H1 (cell line): ENCODE measurements at regions of chr19 and their contacts with region 1.

Region 1: DNA sequence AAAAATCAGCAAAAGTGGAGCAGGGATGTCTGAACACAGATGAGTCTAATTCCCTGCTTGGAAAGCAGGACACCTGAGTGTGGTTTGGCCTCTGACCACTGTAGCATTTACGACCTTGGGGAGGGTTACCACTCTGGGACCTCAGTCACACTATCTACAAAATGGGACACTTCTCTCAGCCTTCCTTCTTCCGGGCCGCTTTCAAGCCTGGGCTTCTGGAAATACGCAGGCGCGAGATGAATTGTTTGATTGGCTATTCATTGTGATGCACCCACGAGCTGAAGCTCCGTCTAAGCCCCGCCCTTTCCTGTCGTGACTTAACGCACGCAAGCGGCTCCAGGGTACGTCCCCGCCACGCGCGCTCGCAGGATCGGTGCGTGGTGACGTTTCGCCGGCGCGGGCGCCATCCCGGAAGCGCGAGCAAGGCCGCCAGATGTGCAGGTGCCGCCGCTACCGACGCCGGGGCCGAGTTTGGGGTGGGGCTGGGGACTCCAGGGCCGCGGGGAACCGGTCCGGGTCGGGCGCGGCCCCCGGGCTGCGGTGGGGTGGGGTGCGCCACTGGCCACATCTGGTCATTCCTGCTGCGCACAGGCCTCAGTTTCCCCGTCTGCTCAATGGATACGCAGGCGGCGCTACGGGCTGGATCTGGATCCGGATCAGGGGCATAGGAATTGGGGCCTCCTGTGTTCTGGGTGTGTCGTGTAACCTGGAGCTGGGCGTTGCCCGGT is at the start of gene KXD1:
- DNase-seq: peak; percentile 73 to 88
- H3K4me3 ChIP-seq: peak within 1 kb of the TSS; percentile 59 to 79 (median 70)
- H3K27ac ChIP-seq: 0 out of 2 replicates have a peak within 1 kb of the TSS, but pooled peaks have one; percentile 17
- H3K4me1 ChIP-seq: no peaks in the 10 kb centered on the region; a peak in 1 of 7 replicates
- H3K27me3 ChIP-seq: no peaks in the 10 kb centered on the region
- CTCF ChIP-seq: no peak
- EP300 ChIP-seq: no peak
- POLR2A ChIP-seq: no peak
- RAD21 ChIP-seq: no peak
- total RNA-seq, gene KXD1: 113 and 115 TPM in 2 replicates

Region 2: DNA sequence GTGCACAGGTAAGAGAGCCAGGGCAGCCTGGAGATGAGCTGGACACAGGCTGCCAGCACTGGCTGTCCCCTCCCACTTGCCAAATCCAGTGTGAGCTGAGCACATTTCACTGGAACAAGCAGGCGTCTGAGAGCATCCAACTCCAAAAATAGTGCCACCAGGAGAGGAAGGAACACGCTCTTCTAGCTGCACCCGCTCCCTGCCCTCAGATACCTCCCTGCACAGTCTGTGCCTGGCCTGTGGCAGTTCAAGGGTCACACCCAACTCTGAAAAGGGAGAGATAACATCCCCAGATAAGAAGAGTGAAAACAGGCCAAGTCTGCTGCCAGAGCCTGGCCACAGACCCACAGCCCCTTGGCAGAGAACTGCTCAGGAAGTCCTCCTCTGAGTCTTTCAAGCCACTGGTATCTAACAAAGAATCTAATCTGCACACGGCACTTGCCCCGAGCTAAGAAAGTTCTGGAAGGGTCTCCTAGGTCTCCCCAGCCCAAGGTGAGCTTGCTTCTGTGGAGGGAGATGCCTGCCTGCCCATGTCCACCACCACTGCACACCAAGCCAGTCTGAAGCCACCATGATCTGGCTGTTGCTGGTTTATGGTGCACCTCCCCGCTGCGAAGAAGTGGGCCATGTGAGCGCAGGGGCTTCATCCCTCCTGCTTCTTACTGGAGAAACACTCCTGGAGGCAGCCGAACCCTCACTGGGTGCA is 50.5 kb before region 1 on chr19:
- CTCF ChIA-PET with region 1: no interaction called
- POLR2A ChIA-PET with region 1: no interaction called
- DNase-seq: no peak
- H3K4me3 ChIP-seq: no peak overlapping the region
- H3K27ac ChIP-seq: no peak overlapping the region
- H3K4me1 ChIP-seq: no peaks in the 10 kb centered on the region; a peak in 1 of 7 replicates
- H3K27me3 ChIP-seq: no peaks in the 10 kb centered on the region
- CTCF ChIP-seq: no peak
- EP300 ChIP-seq: no peak
- POLR2A ChIP-seq: no peak
- RAD21 ChIP-seq: no peak

Region 3: DNA sequence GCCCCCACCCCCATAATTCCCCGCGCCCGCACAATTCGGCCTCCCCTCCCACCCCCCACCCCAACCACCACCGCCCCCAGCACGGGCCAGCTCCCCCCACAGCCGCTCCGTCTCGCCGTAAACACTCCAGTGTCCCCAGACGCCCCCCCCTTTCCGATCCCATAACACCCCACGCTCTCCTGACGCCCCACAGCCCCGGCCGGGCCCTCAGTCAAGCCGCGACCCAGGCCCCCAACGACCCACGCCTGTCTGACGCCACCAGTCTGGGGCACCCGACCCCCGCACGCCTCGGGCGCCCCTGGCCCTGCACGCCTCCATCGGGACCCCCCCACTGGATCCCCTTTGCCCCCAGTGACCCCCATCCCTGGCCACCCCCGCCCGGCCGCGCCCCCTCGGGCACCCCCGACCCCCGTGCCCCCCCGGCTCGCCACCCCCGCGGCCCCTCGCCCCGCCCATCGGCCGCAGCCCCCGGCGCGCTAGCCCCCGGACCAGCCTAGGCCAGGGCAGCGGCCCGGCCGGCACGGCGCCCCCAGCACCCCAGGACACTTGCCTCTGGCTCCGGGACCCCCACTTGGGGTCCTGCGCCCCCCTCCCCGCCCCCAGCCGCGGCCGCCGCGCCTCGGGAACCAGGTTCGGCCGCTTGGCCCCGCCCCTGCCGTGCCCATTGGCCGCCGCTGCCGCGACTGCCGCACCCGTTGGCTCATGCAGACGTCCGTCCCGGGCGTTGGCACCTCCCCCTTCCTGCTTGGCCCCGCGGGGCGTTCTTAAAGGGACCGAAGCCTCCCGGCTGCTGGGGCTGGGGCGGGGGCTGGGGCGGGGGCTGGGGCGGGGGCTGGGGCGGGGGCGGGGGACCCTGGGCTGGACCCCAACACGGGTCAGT is 14.5 kb before region 1 on chr19 and contains the start of gene FKBP8:
- CTCF ChIA-PET with region 1: interaction called, 11 read pairs
- POLR2A ChIA-PET with region 1: interaction called, 9 read pairs
- DNase-seq: peak; percentile 66 to 97
- H3K4me3 ChIP-seq: peak within 1 kb of the TSS; percentile 61 to 77 (median 64)
- H3K27ac ChIP-seq: no peak within 1 kb of the TSS; the same call in 1 of the 2 replicates
- H3K4me1 ChIP-seq: peaks cover 0 to 9% (median 4%) of the 10 kb centered on the region in 4 experiments; a peak in 1 of 7 replicates
- H3K27me3 ChIP-seq: no peaks in the 10 kb centered on the region
- CTCF ChIP-seq: no peak
- EP300 ChIP-seq: no peak
- POLR2A ChIP-seq: no peak
- RAD21 ChIP-seq: no peak
- total RNA-seq, gene FKBP8: 264 and 273 TPM in 2 replicates

Region 4: GRCh38 chr19:18571564-18572300 is 14.1 kb after region 1 on chr19 and contains the start of gene UBA52:
- CTCF ChIA-PET with region 1: interaction called, 6 read pairs
- POLR2A ChIA-PET with region 1: interaction called, 23 read pairs
- DNase-seq: peak; percentile 89 to 99
- H3K4me3 ChIP-seq: peak within 1 kb of the TSS; percentile 93 to 99 (median 98)
- H3K27ac ChIP-seq: peak within 1 kb of the TSS; percentile 89
- H3K4me1 ChIP-seq: peaks cover 0 to 9% (median 6%) of the 10 kb centered on the region in 4 experiments; a peak in 6 of 7 replicates
- H3K27me3 ChIP-seq: no peaks in the 10 kb centered on the region
- CTCF ChIP-seq: peak in 1 of 3 experiments; percentile 15; a peak in 1 of 4 replicates
- EP300 ChIP-seq: no peak
- POLR2A ChIP-seq: peak in 1 of 2 experiments; percentile 91; a peak in 2 of 3 replicates
- RAD21 ChIP-seq: no peak
- total RNA-seq, gene UBA52: 1,331 and 1,340 TPM in 2 replicates

Region 5: GRCh38 chr19:18660052-18660910 is 102.6 kb after region 1 on chr19:
- CTCF ChIA-PET with region 1: no interaction called
- POLR2A ChIA-PET with region 1: no interaction called
- DNase-seq: no peak
- H3K4me3 ChIP-seq: no peak overlapping the region
- H3K27ac ChIP-seq: no peak overlapping the region
- H3K4me1 ChIP-seq: peaks cover 0 to 12% (median 6%) of the 10 kb centered on the region in 4 experiments; a peak in 5 of 7 replicates
- H3K27me3 ChIP-seq: peaks cover 0 to 4% (median 0%) of the 10 kb centered on the region in 4 experiments; a peak in 1 of 7 replicates
- CTCF ChIP-seq: no peak
- EP300 ChIP-seq: no peak
- POLR2A ChIP-seq: no peak
- RAD21 ChIP-seq: no peak